ENCODE measurements at regions of chr12 and their contacts with region 1.

Region 1: GRCh38 chr12:62640910-62641448 is 174.4 kb downstream of the MON2 start:
- DNase-seq: no peak
- H3K4me3 Mint-ChIP-seq: peak overlapping the region; percentile 1
- H3K27ac Mint-ChIP-seq: peak overlapping the region; percentile 75
- H3K4me1 Mint-ChIP-seq: peaks cover 11% of the 10 kb centered on the region
- H3K27me3 Mint-ChIP-seq: peaks cover 17% of the 10 kb centered on the region

Region 2: GRCh38 chr12:62758216-62758615 is 117.2 kb after region 1 on chr12:
- intact Hi-C with region 1: loop called (anchors 1 kb)
- DNase-seq: no peak
- H3K4me3 Mint-ChIP-seq: no peak overlapping the region
- H3K27ac Mint-ChIP-seq: no peak overlapping the region
- H3K4me1 Mint-ChIP-seq: peaks cover 23% of the 10 kb centered on the region
- H3K27me3 Mint-ChIP-seq: peaks cover 10% of the 10 kb centered on the region

Measured in activated T-helper 2 cell treated with anti-CD3 and anti-CD28 coated beads, Interferon-gamma antibody, Interleukin-2, Interleukin-4, amounts not matched to agents 10 μg/mL and 5 μg/mL and 100 μg/mL, durations not matched to agents 14 hours and 24 hours and 36 hours (primary cell).